ENCODE measurements at regions of chr17 and their contacts with region 1.

Region 1: GRCh38 chr17:1573916-1574696 is 11.5 kb upstream of the PITPNA start:
- DNase-seq: peak in 1 of 2 experiments; percentile 94
- H3K4me3 ChIP-seq: no peak overlapping the region
- H3K27ac ChIP-seq: no peak overlapping the region
- H3K4me1 ChIP-seq: peaks cover 0 to 24% (median 18%) of the 10 kb centered on the region in 4 experiments; a peak in 6 of 7 replicates
- H3K27me3 ChIP-seq: no peaks in the 10 kb centered on the region
- CTCF ChIP-seq: peak; percentile 79 to 88 (median 83)
- EP300 ChIP-seq: no peak
- POLR2A ChIP-seq: no peak
- RAD21 ChIP-seq: peak; percentile 79 to 89

Region 2: GRCh38 chr17:1584192-1584591 is 10.1 kb after region 1 on chr17:
- CTCF ChIA-PET with region 1: interaction called, 13 read pairs
- POLR2A ChIA-PET with region 1: interaction called, 7 read pairs
- DNase-seq: no peak
- H3K4me3 ChIP-seq: no peak overlapping the region
- H3K27ac ChIP-seq: no peak overlapping the region
- H3K4me1 ChIP-seq: peaks cover 0 to 14% (median 7%) of the 10 kb centered on the region in 4 experiments; a peak in 6 of 7 replicates
- H3K27me3 ChIP-seq: no peaks in the 10 kb centered on the region
- CTCF ChIP-seq: no peak
- EP300 ChIP-seq: no peak
- POLR2A ChIP-seq: no peak
- RAD21 ChIP-seq: no peak

Region 3: DNA sequence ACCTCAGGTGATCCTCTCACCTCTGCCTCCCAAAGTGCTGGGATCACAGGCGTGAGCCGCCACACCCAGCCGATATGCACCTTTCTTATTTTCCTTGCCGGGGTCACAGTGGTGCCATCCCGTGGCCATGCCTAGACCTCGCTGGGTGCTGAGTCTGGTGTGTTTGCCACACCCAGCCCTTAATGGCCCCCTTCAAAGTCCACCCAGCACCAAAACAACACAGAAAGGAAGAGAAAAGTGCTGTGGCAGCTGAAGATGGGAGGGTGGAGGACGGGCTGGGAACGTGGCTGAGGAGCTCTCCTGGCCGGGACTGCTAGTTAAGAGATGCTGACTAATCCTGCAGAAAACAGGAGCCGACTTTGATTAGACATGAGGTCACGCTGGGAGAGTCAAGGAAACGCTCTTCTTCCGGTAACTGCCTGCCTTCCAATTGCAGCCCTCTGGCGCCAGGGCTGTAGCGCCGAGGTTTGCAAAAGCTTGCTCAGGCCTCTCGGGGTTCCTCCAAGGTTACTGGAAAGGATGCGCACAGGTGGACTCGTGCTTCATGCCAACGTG is 43.6 kb after region 1 on chr17:
- CTCF ChIA-PET with region 1: interaction called, 146 read pairs
- POLR2A ChIA-PET with region 1: interaction called, 7 read pairs
- DNase-seq: no peak
- H3K4me3 ChIP-seq: no peak overlapping the region
- H3K27ac ChIP-seq: no peak overlapping the region
- H3K4me1 ChIP-seq: peaks cover 0 to 4% (median 0%) of the 10 kb centered on the region in 4 experiments; a peak in 2 of 7 replicates
- H3K27me3 ChIP-seq: no peaks in the 10 kb centered on the region
- CTCF ChIP-seq: no peak
- EP300 ChIP-seq: no peak
- POLR2A ChIP-seq: no peak
- RAD21 ChIP-seq: no peak; a peak in 1 of 4 replicates

Region 4: GRCh38 chr17:1628856-1629646 is 54.9 kb after region 1 on chr17:
- CTCF ChIA-PET with region 1: interaction called, 146 read pairs
- POLR2A ChIA-PET with region 1: interaction called, 19 read pairs
- DNase-seq: peak in 1 of 2 experiments; percentile 95
- H3K4me3 ChIP-seq: peak overlapping the region; percentile 67 to 79 (median 68)
- H3K27ac ChIP-seq: peak overlapping the region; percentile 53; the same call in 1 of the 2 replicates
- H3K4me1 ChIP-seq: peaks cover 0 to 7% (median 5%) of the 10 kb centered on the region in 4 experiments; a peak in 6 of 7 replicates
- H3K27me3 ChIP-seq: peaks cover 0 to 13% (median 5%) of the 10 kb centered on the region in 4 experiments; a peak in 5 of 7 replicates
- CTCF ChIP-seq: peak; percentile 9 to 22 (median 14); a peak in 3 of 4 replicates
- EP300 ChIP-seq: no peak; a peak in 1 of 3 replicates
- POLR2A ChIP-seq: peak in 1 of 2 experiments; percentile 72; a peak in 2 of 3 replicates
- RAD21 ChIP-seq: peak in 1 of 2 experiments; percentile 37; a peak in 2 of 4 replicates

Region 5: GRCh38 chr17:1639549-1640343 is 65.6 kb after region 1 on chr17:
- CTCF ChIA-PET with region 1: interaction called, 146 read pairs
- POLR2A ChIA-PET with region 1: interaction called, 3 read pairs
- DNase-seq: no peak
- H3K4me3 ChIP-seq: no peak overlapping the region
- H3K27ac ChIP-seq: no peak overlapping the region
- H3K4me1 ChIP-seq: peaks cover 0 to 30% (median 14%) of the 10 kb centered on the region in 4 experiments; a peak in 5 of 7 replicates
- H3K27me3 ChIP-seq: peaks cover 0 to 13% (median 6%) of the 10 kb centered on the region in 4 experiments; a peak in 5 of 7 replicates
- CTCF ChIP-seq: no peak
- EP300 ChIP-seq: no peak
- POLR2A ChIP-seq: no peak
- RAD21 ChIP-seq: no peak

Region 6: GRCh38 chr17:1648963-1649843 is 75.1 kb after region 1 on chr17:
- CTCF ChIA-PET with region 1: interaction called, 18 read pairs
- POLR2A ChIA-PET with region 1: no interaction called
- DNase-seq: peak in 1 of 2 experiments; percentile 96
- H3K4me3 ChIP-seq: peak overlapping the region; percentile 26 to 77 (median 59)
- H3K27ac ChIP-seq: no peak overlapping the region
- H3K4me1 ChIP-seq: peaks cover 0 to 33% (median 22%) of the 10 kb centered on the region in 4 experiments; a peak in 6 of 7 replicates
- H3K27me3 ChIP-seq: peaks cover 0 to 11% (median 4%) of the 10 kb centered on the region in 4 experiments; a peak in 4 of 7 replicates
- CTCF ChIP-seq: peak; percentile 79 to 98 (median 92)
- EP300 ChIP-seq: no peak; a peak in 1 of 3 replicates
- POLR2A ChIP-seq: no peak
- RAD21 ChIP-seq: peak; percentile 45 to 67; a peak in 3 of 4 replicates